H1 (cell line): ENCODE measurements at regions of chr1 and their contacts with region 1.

Region 1: GRCh38 chr1:17439250-17440073 is at the start of gene RCC2:
- DNase-seq: peak in 1 of 2 experiments; percentile 75
- H3K4me3 ChIP-seq: peak within 1 kb of the TSS; percentile 83 to 98 (median 90)
- H3K27ac ChIP-seq: peak within 1 kb of the TSS; percentile 94
- H3K4me1 ChIP-seq: peaks cover 24 to 41% (median 37%) of the 10 kb centered on the region in 4 experiments
- H3K27me3 ChIP-seq: peaks cover 0 to 6% (median 4%) of the 10 kb centered on the region in 4 experiments; a peak in 4 of 7 replicates
- CTCF ChIP-seq: peak in 2 of 3 experiments; percentile 4 to 60; a peak in 1 of 4 replicates
- EP300 ChIP-seq: no peak
- POLR2A ChIP-seq: peak in 1 of 2 experiments; percentile 44; a peak in 1 of 3 replicates
- RAD21 ChIP-seq: no peak
- total RNA-seq, gene RCC2: 454 and 455 TPM in 2 replicates

Region 2: GRCh38 chr1:17405898-17406759 is 33.3 kb before region 1 on chr1:
- CTCF ChIA-PET with region 1: interaction called, 5 read pairs
- POLR2A ChIA-PET with region 1: interaction called, 116 read pairs
- DNase-seq: peak; percentile 50 to 89
- H3K4me3 ChIP-seq: no peak overlapping the region
- H3K27ac ChIP-seq: no peak overlapping the region
- H3K4me1 ChIP-seq: peaks cover 0 to 10% (median 6%) of the 10 kb centered on the region in 4 experiments; a peak in 4 of 7 replicates
- H3K27me3 ChIP-seq: no peaks in the 10 kb centered on the region
- CTCF ChIP-seq: peak; percentile 90 to 98 (median 92)
- EP300 ChIP-seq: no peak
- POLR2A ChIP-seq: peak in 1 of 2 experiments; percentile 50
- RAD21 ChIP-seq: peak; percentile 82 to 83

Region 3: GRCh38 chr1:17419626-17420328 is 19.7 kb before region 1 on chr1:
- CTCF ChIA-PET with region 1: interaction called, 6 read pairs
- POLR2A ChIA-PET with region 1: interaction called, 146 read pairs
- DNase-seq: peak; percentile 67 to 95
- H3K4me3 ChIP-seq: no peak overlapping the region
- H3K27ac ChIP-seq: peak overlapping the region; percentile 5; the same call in 1 of the 2 replicates
- H3K4me1 ChIP-seq: no peaks in the 10 kb centered on the region; a peak in 1 of 7 replicates
- H3K27me3 ChIP-seq: no peaks in the 10 kb centered on the region
- CTCF ChIP-seq: peak; percentile 91 to 97 (median 94)
- EP300 ChIP-seq: peak in 1 of 2 experiments; percentile 25; a peak in 1 of 3 replicates
- POLR2A ChIP-seq: peak in 1 of 2 experiments; percentile 67; a peak in 2 of 3 replicates
- RAD21 ChIP-seq: peak; percentile 87 to 95

Region 4: GRCh38 chr1:17427696-17428660 is 11.5 kb before region 1 on chr1:
- CTCF ChIA-PET with region 1: interaction called, 7 read pairs
- POLR2A ChIA-PET with region 1: interaction called, 146 read pairs
- DNase-seq: no peak
- H3K4me3 ChIP-seq: no peak overlapping the region
- H3K27ac ChIP-seq: 0 out of 2 replicates have a peak overlapping the region, but pooled peaks have one; percentile 29
- H3K4me1 ChIP-seq: peaks cover 2 to 21% (median 15%) of the 10 kb centered on the region in 4 experiments
- H3K27me3 ChIP-seq: no peaks in the 10 kb centered on the region
- CTCF ChIP-seq: no peak
- EP300 ChIP-seq: no peak
- POLR2A ChIP-seq: peak; percentile 15 to 45; a peak in 1 of 3 replicates
- RAD21 ChIP-seq: no peak

Region 5: GRCh38 chr1:17465228-17465627 is 25.8 kb after region 1 on chr1:
- CTCF ChIA-PET with region 1: interaction called, 10 read pairs
- POLR2A ChIA-PET with region 1: interaction called, 155 read pairs
- DNase-seq: no peak
- H3K4me3 ChIP-seq: no peak overlapping the region
- H3K27ac ChIP-seq: no peak overlapping the region
- H3K4me1 ChIP-seq: peaks cover 5 to 11% (median 6%) of the 10 kb centered on the region in 4 experiments
- H3K27me3 ChIP-seq: no peaks in the 10 kb centered on the region
- CTCF ChIP-seq: no peak
- EP300 ChIP-seq: no peak
- POLR2A ChIP-seq: no peak
- RAD21 ChIP-seq: no peak

Region 6: DNA sequence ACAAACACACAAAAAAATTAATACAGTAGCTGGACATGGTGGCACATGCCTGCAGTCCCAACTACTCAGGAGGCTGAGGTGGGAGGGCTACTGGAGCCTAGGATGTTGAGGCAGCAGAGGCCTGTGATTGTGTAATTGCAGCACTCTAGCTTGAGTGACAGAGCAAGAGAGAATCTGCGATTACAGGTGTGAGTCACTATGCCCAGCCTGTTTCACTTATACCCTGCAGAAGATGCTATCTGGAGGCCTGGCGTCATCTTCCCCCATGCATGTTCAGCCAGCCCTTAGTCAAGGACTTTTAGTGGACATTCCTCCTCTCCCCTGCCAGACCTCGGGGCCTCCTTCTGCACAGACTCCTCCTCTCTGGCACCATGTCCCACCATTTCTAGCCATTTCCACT is 36.3 kb after region 1 on chr1:
- CTCF ChIA-PET with region 1: interaction called, 20 read pairs
- POLR2A ChIA-PET with region 1: interaction called, 155 read pairs
- DNase-seq: no peak
- H3K4me3 ChIP-seq: no peak overlapping the region
- H3K27ac ChIP-seq: no peak overlapping the region
- H3K4me1 ChIP-seq: peaks cover 0 to 7% (median 2%) of the 10 kb centered on the region in 4 experiments; a peak in 4 of 7 replicates
- H3K27me3 ChIP-seq: no peaks in the 10 kb centered on the region
- CTCF ChIP-seq: no peak
- EP300 ChIP-seq: no peak
- POLR2A ChIP-seq: no peak
- RAD21 ChIP-seq: no peak

Region 7: GRCh38 chr1:17485280-17485679 is 45.8 kb after region 1 on chr1:
- CTCF ChIA-PET with region 1: interaction called, 9 read pairs
- POLR2A ChIA-PET with region 1: interaction called, 62 read pairs
- DNase-seq: peak; percentile 36 to 71
- H3K4me3 ChIP-seq: no peak overlapping the region
- H3K27ac ChIP-seq: no peak overlapping the region
- H3K4me1 ChIP-seq: no peaks in the 10 kb centered on the region; a peak in 1 of 7 replicates
- H3K27me3 ChIP-seq: no peaks in the 10 kb centered on the region; a peak in 1 of 7 replicates
- CTCF ChIP-seq: peak; percentile 57 to 74 (median 69)
- EP300 ChIP-seq: no peak
- POLR2A ChIP-seq: no peak
- RAD21 ChIP-seq: peak; percentile 72 to 77